Head of caudate nucleus (tissue), 42 donors: ENCODE measurements at regions of chr20 and their contacts with region 1.

Region 1: GRCh38 chr20:59032023-59032712 is at the start of gene ATP5F1E:
- DNase-seq: peak; percentile 89 to 99 (median 97)

Region 2: DNA sequence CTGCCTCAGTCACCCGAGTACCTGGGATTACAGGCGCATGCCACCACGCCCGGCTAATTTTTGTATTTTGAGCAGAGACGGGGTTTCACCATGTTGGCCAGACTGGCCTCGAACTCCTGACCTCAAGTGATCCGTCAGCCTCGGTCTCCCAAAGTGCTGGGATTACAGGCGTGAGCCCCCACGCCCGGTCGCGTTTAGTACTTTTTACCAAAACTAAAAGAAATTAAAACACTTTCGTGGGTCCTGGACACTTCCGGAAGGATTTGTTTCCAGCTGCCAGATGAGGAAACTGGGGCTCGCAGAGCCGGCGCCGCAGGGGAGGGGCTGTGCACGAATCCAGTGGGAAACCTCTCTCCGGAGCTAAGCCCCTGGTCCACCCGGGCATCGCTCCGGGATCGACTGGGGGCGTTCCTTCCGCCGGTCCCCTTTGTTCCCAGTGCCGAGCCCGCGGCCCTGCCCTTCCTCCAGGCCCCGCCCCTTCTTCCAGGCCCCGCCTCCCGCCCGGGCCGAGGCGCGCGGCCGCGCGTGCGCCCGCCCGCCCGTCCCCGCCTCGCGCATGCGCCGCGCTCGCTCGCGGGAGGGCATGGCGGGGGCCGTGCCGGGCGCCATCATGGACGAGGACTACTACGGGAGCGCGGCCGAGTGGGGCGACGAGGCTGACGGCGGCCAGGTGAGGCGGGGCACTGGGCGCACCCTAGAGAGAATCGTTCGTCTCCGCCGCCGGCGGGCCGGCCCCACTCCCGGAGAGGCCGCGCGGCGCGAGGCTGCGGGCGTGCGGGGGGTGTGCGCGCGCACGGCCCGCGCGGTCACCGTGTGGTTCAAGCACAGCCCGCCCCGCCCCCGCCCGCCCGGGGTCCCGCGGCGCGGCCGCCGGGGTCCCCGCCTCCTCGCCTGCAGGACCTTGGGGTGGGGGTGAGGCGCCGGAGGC is 51.2 kb before region 1 on chr20 and contains the start of gene NELFCD:
- intact Hi-C with region 1: loop called (anchors 5 kb)
- DNase-seq: peak; percentile 53 to 92 (median 84)

Region 3: DNA sequence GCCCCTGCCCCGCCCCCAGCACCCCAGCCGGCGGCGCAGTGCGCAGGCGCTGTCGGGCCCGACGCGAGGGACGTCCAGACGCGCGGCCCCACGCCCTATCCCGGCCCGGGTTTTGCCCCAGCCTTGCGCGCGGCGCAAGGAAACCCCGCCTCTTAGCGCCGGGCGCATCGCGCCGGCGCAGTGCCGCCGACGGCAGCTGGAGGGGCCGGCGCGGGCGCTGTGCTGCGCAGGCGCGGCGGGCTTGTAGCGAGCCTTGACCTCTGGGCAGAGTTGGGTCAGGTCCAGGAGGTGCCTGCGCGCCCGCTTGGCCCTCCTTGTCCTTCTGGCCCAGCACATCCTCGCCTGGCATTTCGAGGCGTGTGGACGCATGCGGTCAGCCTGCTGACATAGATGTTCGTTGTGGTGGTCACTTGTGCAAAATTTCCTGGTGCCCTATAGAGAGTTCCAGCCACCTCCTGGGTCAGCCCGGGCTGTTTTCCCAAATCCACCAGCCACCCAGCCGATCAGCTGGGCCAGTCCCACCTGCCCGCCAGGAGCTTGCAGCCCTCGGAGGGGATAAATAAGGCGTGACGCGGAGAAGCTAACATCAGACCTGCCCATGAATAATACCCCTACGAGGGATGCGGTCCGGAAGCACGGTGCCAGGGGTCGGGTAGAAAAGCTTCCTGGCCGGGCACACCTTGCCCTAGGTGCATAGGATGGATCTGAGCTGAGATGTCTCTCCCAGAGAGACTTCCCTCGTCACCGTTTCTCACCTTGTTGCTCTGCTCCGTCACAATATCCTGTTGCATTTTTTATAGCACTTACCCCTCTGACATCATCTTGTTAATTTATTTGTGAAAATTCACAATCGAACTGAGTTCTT is 10.9 kb after region 1 on chr20:
- intact Hi-C with region 1: loop called (anchors 1 kb)
- DNase-seq: peak; percentile 69 to 96 (median 91)

Region 4: GRCh38 chr20:59112978-59113377 is 80.8 kb after region 1 on chr20:
- intact Hi-C with region 1: no loop called
- DNase-seq: no peak